ENCODE measurements at regions of chr9 and their contacts with region 1.

Region 1: DNA sequence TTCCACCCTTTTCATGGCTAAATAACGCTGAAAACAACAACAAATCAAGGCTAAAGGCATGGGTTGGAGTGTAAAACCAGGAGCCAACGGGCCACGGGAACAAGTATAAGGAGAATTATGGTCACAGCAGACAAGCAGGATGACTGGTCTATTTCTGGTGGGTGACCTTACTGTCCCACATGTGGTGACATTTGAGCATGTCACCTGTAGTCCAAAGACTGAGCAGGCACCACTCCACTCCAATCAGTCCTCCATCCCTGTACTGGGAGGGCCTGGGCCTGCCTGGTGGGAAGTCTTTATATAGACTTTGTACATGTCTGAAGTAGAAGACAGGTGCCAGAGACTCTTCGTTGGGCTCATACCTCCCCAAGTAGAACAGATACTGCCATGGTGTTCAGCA is 36.8 kb downstream of the C9orf153 start:
- DNase-seq: no peak
- H3K4me3 ChIP-seq: no peak overlapping the region
- H3K27ac ChIP-seq: no peak overlapping the region
- H3K4me1 ChIP-seq: no peaks in the 10 kb centered on the region
- H3K27me3 ChIP-seq: no peaks in the 10 kb centered on the region
- CTCF ChIP-seq: no peak

Region 2: DNA sequence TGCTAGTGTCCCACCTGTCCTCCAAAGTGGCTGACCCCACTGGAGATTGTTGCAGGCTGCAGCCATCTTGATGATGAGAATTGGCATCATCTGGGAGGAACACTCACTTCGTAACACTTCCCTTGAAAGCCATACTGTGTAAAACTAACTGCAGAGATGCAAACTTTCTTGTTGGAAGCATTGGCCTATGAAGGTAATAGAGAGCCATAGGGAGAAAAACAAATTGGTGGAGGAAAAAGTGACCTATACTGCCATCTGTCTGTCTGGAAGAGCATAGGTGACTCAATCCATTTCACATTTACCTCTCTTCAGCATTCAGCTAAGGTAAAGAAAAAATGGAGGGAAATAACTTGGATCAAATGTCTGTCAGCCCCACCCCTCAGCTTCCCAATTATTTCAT is 1079.7 kb before region 1 on chr9:
- CTCF ChIA-PET with region 1: no interaction called
- POLR2A ChIA-PET with region 1: interaction called, 18 read pairs
- intact Hi-C with region 1: no loop called
- DNase-seq: no peak
- H3K4me3 ChIP-seq: no peak overlapping the region
- H3K27ac ChIP-seq: no peak overlapping the region
- H3K4me1 ChIP-seq: no peaks in the 10 kb centered on the region
- H3K27me3 ChIP-seq: peaks cover 4% of the 10 kb centered on the region; the same call in 1 of the 2 replicates
- CTCF ChIP-seq: peak; percentile 56

Region 3: DNA sequence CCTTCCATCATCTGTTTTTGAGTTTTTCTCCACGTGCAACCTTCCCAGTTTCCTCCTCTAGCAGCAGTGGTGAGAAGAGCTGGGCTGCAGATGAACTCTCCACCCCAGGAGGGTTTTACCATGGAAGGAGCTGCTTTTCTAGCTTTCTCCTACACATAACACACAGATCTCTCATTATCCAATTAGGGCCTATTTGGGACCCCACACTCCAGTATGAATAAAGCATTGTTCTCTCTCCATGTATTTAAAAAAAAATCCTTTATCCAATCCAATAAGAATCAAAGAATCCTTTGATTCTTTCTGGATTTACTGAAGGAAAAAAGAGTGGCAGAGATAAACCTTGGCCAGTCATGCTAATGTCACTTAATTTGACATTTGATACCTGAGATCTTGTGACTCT is 313.3 kb before region 1 on chr9:
- CTCF ChIA-PET with region 1: interaction called, 11 read pairs
- POLR2A ChIA-PET with region 1: no interaction called
- intact Hi-C with region 1: no loop called
- DNase-seq: no peak
- H3K4me3 ChIP-seq: no peak overlapping the region
- H3K27ac ChIP-seq: no peak overlapping the region
- H3K4me1 ChIP-seq: no peaks in the 10 kb centered on the region
- H3K27me3 ChIP-seq: no peaks in the 10 kb centered on the region
- CTCF ChIP-seq: no peak

Measured in PC-9 (cell line).